Mammary epithelial cell (primary cell): ENCODE measurements at regions of chr20 and their contacts with region 1.

Region 1: GRCh38 chr20:667391-667964 is 8.1 kb downstream of the SCRT2 start:
- DNase-seq: no peak
- H3K4me3 ChIP-seq: no peak overlapping the region
- H3K27ac ChIP-seq: no peak overlapping the region
- H3K4me1 ChIP-seq: peaks cover 6% of the 10 kb centered on the region
- H3K27me3 ChIP-seq: peaks cover 12% of the 10 kb centered on the region
- CTCF ChIP-seq: peak; percentile 90 to 93

Region 2: DNA sequence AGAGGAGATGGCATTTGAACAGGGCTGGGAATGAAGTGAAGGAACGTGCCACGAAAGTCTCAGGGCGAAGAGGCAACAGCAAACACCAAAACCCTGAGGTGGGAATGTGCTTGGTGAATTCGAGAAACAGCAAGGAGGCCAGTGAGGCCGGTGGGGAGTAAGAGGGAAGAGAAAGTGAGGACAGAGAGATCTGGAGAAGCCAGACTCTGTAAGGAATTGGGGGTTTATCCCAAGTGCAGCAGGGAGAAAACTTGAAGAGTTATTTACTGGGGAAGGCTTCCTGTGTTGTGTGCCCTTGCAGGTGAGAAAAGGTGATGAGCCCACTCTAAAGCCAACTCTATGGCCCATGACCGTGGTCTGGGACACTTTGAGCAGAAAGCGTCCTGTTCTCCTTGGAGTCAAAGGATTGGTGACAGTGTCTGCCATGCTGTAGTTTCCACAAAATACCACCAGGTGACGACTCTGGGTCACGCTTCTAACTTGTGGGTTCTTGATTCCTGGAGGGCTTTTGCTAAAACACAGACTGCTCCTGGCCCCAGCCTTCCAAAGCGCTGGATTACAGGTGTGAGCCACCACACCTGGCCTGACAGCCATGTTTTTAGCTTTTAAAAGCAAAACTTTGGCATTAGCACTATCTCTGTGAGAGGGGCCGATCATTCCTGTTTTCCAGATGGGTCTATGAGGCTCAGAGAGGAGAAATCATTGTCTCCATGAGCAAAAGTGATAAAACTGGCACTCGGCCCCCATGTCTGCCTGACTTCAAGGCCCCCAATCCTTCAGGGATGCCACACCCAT is 105.8 kb before region 1 on chr20:
- CTCF ChIA-PET with region 1: no interaction called
- dilution Hi-C with region 1: no loop called
- in situ Hi-C with region 1: no loop called
- intact Hi-C with region 1: loop called (anchors 1 kb)
- DNase-seq: peak; percentile 50
- H3K4me3 ChIP-seq: no peak overlapping the region
- H3K27ac ChIP-seq: no peak overlapping the region
- H3K4me1 ChIP-seq: no peaks in the 10 kb centered on the region
- H3K27me3 ChIP-seq: no peaks in the 10 kb centered on the region
- CTCF ChIP-seq: peak; percentile 97 to 100

Region 3: GRCh38 chr20:653110-653589 is 14.3 kb before region 1 on chr20 and contains the start of gene SRXN1:
- CTCF ChIA-PET with region 1: no interaction called
- dilution Hi-C with region 1: no loop called
- in situ Hi-C with region 1: no loop called
- intact Hi-C with region 1: loop called (anchors 1 kb)
- DNase-seq: peak; percentile 93
- H3K4me3 ChIP-seq: peak within 1 kb of the TSS; percentile 77 to 81 (median 78)
- H3K27ac ChIP-seq: peak within 1 kb of the TSS; percentile 64
- H3K4me1 ChIP-seq: peaks cover 12% of the 10 kb centered on the region
- H3K27me3 ChIP-seq: no peaks in the 10 kb centered on the region
- CTCF ChIP-seq: peak; percentile 42 to 78
- total RNA-seq, gene SRXN1: 49.9 to 68.0 TPM